ENCODE measurements at regions of chr15 and their contacts with region 1.

Region 1: GRCh38 chr15:43404130-43404529 is 33.2 kb downstream of the TUBGCP4 start:
- DNase-seq: no peak
- H3K4me3 ChIP-seq: no peak overlapping the region
- H3K27ac ChIP-seq: no peak overlapping the region
- H3K4me1 ChIP-seq: peaks cover 0 to 2% (median 0%) of the 10 kb centered on the region in 4 donors
- H3K27me3 ChIP-seq: no peaks in the 10 kb centered on the region
- CTCF ChIP-seq: no peak
- EP300 ChIP-seq: no peak
- POLR2A ChIP-seq: no peak

Region 2: DNA sequence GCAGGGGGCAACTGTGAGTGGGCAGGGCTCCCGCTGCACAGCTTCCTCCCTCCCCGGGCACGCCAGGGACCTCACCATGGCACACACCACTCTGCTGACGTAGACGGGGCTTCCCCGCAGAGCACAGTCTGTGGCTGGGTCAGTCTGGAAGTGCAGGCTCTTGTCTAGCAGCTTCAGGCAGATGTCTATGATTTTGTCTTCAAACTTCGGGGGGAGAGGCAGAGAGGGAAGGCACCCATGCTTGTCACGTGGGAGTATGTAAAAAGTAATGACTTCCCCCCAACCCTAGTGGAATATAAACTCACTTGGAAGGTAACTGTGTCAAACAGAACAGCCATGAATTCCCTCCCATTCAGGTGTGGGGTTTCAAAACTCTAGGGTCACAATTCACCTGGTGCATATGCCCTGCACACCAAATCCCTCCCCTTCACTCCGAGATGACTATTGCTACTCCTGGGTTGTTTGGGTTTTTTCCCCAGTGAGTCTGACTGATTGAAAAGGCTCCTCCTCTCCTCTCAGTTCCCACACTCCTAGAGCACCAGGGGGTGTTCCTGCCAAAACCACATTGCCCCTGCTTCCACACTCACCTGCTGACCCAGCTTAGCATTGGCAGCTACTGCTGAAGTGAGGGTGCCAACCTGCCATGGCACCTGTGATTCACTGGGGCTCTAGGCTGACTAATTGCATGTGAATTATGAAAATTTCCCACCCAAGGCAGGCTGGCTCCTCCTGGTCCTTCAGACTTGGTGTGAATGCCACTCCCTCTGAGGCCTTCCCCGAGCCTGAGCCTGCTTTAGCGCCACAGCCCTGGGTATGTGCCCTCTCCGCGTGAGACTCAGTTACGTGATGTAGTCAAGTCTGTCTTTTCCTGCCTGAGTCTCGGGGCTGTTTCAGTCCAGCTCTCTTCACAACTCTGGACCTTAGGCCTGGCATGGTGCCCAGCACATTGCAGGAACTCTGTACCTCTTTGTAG is 150.4 kb before region 1 on chr15:
- in situ Hi-C with region 1: no loop called
- intact Hi-C with region 1: no loop called
- DNase-seq: peak; percentile 20
- H3K4me3 ChIP-seq: no peak overlapping the region
- H3K27ac ChIP-seq: no peak overlapping the region
- H3K4me1 ChIP-seq: no peaks in the 10 kb centered on the region
- H3K27me3 ChIP-seq: no peaks in the 10 kb centered on the region
- CTCF ChIP-seq: no peak
- EP300 ChIP-seq: no peak
- POLR2A ChIP-seq: no peak

Region 3: GRCh38 chr15:43352693-43353382 is 51.3 kb before region 1 on chr15:
- in situ Hi-C with region 1: no loop called
- intact Hi-C with region 1: loop called (anchors 1 kb)
- DNase-seq: no peak
- H3K4me3 ChIP-seq: no peak overlapping the region
- H3K27ac ChIP-seq: no peak overlapping the region
- H3K4me1 ChIP-seq: no peaks in the 10 kb centered on the region
- H3K27me3 ChIP-seq: no peaks in the 10 kb centered on the region
- CTCF ChIP-seq: no peak
- EP300 ChIP-seq: no peak
- POLR2A ChIP-seq: no peak

Region 4: DNA sequence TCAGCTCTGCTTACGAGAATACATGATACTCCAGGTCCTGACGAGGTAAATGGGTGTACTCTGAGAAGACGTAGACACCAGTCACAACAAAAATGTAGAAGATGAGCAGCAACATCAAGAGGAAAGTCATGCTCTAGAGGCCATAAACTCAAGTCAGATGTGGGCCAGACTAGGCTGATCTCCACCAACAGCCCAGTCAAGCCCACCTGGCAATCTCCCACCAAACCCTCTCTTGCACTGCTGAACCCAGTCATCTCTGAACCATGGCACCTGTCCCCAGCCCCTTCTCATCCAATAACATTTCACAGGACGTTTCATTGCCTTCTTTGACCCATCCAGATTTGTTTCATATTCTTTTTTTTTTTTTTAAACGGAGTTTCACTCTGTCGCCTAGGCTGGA is 331.3 kb after region 1 on chr15:
- in situ Hi-C with region 1: no loop called
- intact Hi-C with region 1: no loop called
- DNase-seq: no peak
- H3K4me3 ChIP-seq: no peak overlapping the region
- H3K27ac ChIP-seq: no peak overlapping the region
- H3K4me1 ChIP-seq: no peaks in the 10 kb centered on the region
- H3K27me3 ChIP-seq: no peaks in the 10 kb centered on the region
- CTCF ChIP-seq: no peak
- EP300 ChIP-seq: no peak
- POLR2A ChIP-seq: no peak

Region 5: DNA sequence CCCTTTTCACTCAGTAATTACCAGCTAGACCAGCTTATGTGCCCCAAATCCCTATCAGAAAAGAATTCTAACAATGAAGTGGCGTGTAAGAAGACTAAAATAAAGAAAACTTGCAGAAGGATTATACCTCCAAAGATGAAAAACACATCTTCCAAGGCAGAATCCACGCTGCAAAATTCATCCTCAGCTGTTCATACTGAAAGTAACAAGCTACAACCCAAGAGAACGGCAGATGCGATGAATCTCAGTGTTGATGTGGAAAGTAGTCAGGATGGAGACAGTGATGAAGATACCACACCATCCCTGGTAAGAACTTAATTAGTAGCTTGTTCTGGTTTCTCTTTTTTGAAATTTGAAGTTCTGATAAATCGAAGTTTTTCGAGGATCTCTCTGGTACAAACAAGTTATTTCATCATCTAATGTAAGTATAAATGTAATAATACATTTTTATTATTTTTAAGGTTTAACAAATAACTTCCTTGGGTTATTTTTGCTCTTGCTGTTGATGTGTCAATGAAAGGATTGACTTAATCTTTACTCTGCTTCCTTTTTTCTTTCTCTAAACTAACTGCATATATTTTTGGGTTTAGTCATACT is 424.0 kb after region 1 on chr15:
- in situ Hi-C with region 1: no loop called
- intact Hi-C with region 1: no loop called
- DNase-seq: no peak
- H3K4me3 ChIP-seq: peak overlapping the region in 1 of 4 donors; percentile 4
- H3K27ac ChIP-seq: peak overlapping the region; percentile 73 to 84 (median 78)
- H3K4me1 ChIP-seq: peaks cover 7 to 35% (median 21%) of the 10 kb centered on the region in 4 donors
- H3K27me3 ChIP-seq: no peaks in the 10 kb centered on the region
- CTCF ChIP-seq: no peak
- EP300 ChIP-seq: no peak
- POLR2A ChIP-seq: no peak

Measured in transverse colon (tissue), 4 donors.